Activated naive CD4-positive, alpha-beta T cell treated with anti-CD3 and anti-CD28 coated beads for 36 hours (primary cell): ENCODE measurements at regions of chr13 and their contacts with region 1.

Region 1: GRCh38 chr13:28138012-28138755 is at the start of gene PAN3:
- DNase-seq: peak; percentile 92
- H3K4me3 Mint-ChIP-seq: peak within 1 kb of the TSS; percentile 77
- H3K27ac Mint-ChIP-seq: peak within 1 kb of the TSS; percentile 96
- H3K4me1 Mint-ChIP-seq: peaks cover 37% of the 10 kb centered on the region
- H3K27me3 Mint-ChIP-seq: no peaks in the 10 kb centered on the region
- total RNA-seq, gene PAN3: 21.2 to 21.7 TPM

Region 2: DNA sequence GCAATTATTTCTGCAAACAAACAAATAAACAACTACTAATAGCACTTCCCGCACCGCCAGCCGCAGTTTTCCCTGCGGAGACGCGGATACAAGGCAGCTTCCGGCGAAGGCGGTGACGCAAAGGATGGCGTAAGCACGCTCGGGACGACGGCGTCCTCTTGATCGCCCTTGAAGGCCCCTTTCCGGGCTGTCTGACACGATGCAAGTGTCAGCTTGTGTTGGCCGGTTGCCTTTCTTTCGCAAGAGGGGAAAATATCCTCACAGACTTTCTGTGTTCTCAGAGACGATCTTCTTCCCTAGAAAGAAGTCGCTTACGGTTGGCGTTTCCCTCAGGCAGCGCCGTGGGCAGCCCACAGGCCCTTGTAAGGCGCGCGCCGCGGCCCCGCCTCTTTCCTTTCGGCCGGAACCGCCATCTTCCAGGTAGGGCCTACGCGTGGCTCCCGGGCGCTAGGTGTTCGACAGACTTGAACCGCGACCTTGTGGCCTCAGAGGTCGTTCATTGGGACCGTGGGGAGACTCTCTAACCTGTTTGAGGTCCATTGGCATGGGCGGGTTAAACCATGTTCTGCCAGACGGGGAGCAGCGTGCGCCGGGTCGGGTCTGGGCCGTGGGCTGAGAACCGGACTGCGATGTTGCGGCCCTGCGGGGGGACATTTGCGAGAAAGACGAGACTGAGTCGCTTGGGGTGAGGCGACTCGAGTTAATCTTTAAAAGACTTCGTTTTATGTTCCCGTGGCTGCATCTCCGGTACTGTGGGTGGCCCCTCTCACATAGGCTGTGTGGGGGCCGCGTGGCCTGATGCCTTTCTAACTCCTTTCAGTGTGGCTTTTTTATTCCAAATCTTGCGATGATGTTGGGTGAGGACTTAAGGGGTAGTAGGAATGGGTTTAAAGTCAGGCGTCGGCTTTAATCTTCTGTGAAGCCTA is 886.8 kb before region 1 on chr13 and contains the start of gene RPL21:
- CTCF ChIA-PET with region 1: no interaction called
- intact Hi-C with region 1: loop called (anchors 5 kb)
- DNase-seq: peak; percentile 94
- H3K4me3 Mint-ChIP-seq: peak within 1 kb of the TSS; percentile 99
- H3K27ac Mint-ChIP-seq: peak within 1 kb of the TSS; percentile 99
- H3K4me1 Mint-ChIP-seq: peaks cover 43% of the 10 kb centered on the region
- H3K27me3 Mint-ChIP-seq: no peaks in the 10 kb centered on the region
- total RNA-seq, gene RPL21: 1,766 to 1,839 TPM

Region 3: GRCh38 chr13:27620377-27621115 is 517.6 kb before region 1 on chr13 and contains the start of gene LNX2:
- CTCF ChIA-PET with region 1: no interaction called
- intact Hi-C with region 1: loop called (anchors 1 kb)
- DNase-seq: peak; percentile 97
- H3K4me3 Mint-ChIP-seq: peak within 1 kb of the TSS; percentile 87
- H3K27ac Mint-ChIP-seq: peak within 1 kb of the TSS; percentile 89
- H3K4me1 Mint-ChIP-seq: peaks cover 52% of the 10 kb centered on the region
- H3K27me3 Mint-ChIP-seq: no peaks in the 10 kb centered on the region
- total RNA-seq, gene LNX2: 5.8 to 6.4 TPM

Region 4: DNA sequence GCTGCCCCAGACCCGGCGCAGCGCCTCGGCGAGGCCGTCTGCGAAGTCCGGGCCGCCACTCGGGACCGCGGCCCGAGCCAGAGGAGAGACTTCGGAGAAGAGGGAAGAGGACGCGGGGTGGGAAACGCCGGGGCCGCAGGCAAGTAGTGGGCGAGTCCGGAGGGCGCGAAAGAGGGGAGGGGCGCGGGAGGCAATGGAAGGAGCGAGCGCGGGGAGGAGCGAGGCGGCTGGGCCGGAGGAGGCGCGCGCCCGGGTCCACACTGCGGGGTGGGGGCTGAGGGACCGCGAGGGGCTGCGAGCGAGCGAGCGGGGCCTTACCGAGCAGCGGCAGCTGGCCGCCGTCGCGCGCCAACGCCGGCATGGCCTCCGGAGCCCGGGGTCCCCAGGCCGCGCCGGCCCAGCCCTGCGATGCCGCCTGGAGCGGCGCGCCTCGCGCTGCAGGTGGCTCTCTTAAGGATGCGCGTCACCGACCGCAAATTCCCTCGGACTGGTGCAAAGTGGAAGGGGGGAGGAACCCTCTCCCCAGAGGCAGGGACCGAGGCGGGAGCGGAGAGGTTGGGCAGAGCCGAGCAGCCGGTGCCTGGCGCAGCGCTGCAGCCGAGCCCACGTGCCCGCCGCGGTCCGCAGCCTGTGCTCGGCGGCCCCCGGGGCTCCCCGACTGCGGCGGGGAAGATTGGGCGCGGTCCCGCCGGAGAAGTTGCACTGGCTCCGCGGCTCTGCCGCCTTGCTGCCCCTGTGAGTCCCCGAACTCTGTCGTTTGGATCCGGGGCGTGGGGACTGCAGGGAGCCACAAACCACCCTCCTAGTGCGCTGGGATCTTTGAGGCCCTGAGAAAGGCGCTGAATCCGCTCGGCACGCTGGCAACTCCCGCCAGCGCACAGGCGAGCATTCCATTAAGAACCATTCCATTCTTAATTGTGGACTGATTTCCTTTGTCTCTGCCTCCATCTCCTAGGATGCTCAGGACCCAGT is 37.7 kb before region 1 on chr13 and contains the start of gene FLT3:
- CTCF ChIA-PET with region 1: no interaction called
- intact Hi-C with region 1: loop called (anchors 1 kb)
- DNase-seq: peak; percentile 67
- H3K4me3 Mint-ChIP-seq: peak within 1 kb of the TSS; percentile 59
- H3K27ac Mint-ChIP-seq: no peak within 1 kb of the TSS
- H3K4me1 Mint-ChIP-seq: peaks cover 5% of the 10 kb centered on the region
- H3K27me3 Mint-ChIP-seq: peaks cover 44% of the 10 kb centered on the region
- total RNA-seq, gene FLT3: not detected

Region 5: DNA sequence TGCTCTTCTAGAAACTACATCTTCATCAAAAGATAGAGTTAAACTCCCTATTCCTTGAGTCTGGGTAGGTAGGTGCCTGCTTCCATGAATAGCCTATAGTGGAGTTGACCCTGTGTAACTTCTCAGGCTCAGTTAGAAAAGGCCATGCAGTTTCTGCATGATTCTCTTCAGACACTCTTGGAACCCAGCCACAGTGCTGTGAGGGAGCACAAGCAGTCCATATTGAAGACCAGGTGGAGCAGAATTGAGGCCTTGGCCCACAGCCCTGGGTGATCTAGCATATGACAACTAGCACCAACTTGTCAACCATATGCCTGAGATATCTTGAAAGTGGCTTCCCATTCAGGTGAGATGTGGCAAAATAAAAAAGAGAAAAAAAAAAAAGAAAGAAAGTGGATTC is 10.2 kb before region 1 on chr13:
- CTCF ChIA-PET with region 1: no interaction called
- intact Hi-C with region 1: no loop called
- DNase-seq: no peak
- H3K4me3 Mint-ChIP-seq: no peak overlapping the region
- H3K27ac Mint-ChIP-seq: no peak overlapping the region
- H3K4me1 Mint-ChIP-seq: no peaks in the 10 kb centered on the region
- H3K27me3 Mint-ChIP-seq: peaks cover 2% of the 10 kb centered on the region

Region 6: GRCh38 chr13:28268800-28269223 is 130.6 kb after region 1 on chr13:
- CTCF ChIA-PET with region 1: no interaction called
- intact Hi-C with region 1: loop called (anchors 2 kb)
- DNase-seq: no peak
- H3K4me3 Mint-ChIP-seq: no peak overlapping the region
- H3K27ac Mint-ChIP-seq: peak overlapping the region; percentile 34
- H3K4me1 Mint-ChIP-seq: peaks cover 14% of the 10 kb centered on the region
- H3K27me3 Mint-ChIP-seq: no peaks in the 10 kb centered on the region

Region 7: GRCh38 chr13:28582225-28582891 is 444.2 kb after region 1 on chr13:
- CTCF ChIA-PET with region 1: no interaction called
- intact Hi-C with region 1: no loop called
- DNase-seq: peak; percentile 61
- H3K4me3 Mint-ChIP-seq: no peak overlapping the region
- H3K27ac Mint-ChIP-seq: peak overlapping the region; percentile 12
- H3K4me1 Mint-ChIP-seq: peaks cover 15% of the 10 kb centered on the region
- H3K27me3 Mint-ChIP-seq: peaks cover 4% of the 10 kb centered on the region

Region 8: GRCh38 chr13:28636674-28637317 is 498.6 kb after region 1 on chr13:
- CTCF ChIA-PET with region 1: no interaction called
- intact Hi-C with region 1: loop called (anchors 5 kb)
- DNase-seq: peak; percentile 77
- H3K4me3 Mint-ChIP-seq: no peak overlapping the region
- H3K27ac Mint-ChIP-seq: peak overlapping the region; percentile 10
- H3K4me1 Mint-ChIP-seq: peaks cover 9% of the 10 kb centered on the region
- H3K27me3 Mint-ChIP-seq: peaks cover 17% of the 10 kb centered on the region

Region 9: GRCh38 chr13:28718543-28719226 is 580.5 kb after region 1 on chr13 and contains the start of gene SLC46A3:
- CTCF ChIA-PET with region 1: no interaction called
- intact Hi-C with region 1: loop called (anchors 1 kb)
- DNase-seq: peak; percentile 98
- H3K4me3 Mint-ChIP-seq: peak within 1 kb of the TSS; percentile 94
- H3K27ac Mint-ChIP-seq: peak within 1 kb of the TSS; percentile 86
- H3K4me1 Mint-ChIP-seq: peaks cover 22% of the 10 kb centered on the region
- H3K27me3 Mint-ChIP-seq: no peaks in the 10 kb centered on the region
- total RNA-seq, gene SLC46A3: 2.2 to 3.2 TPM